Heart right ventricle (tissue), 16 donors: ENCODE measurements at regions of chr1 and their contacts with region 1.

Region 1: GRCh38 chr1:200738740-200739498 is at the start of gene CAMSAP2:
- DNase-seq: peak; percentile 91 to 92
- ATAC-seq: peak; percentile 91 to 97 (median 93)
- H3K4me3 ChIP-seq: peak within 1 kb of the TSS; percentile 69 to 98 (median 90)
- H3K27ac ChIP-seq: peak within 1 kb of the TSS; percentile 97 to 100 (median 100)
- H3K4me1 ChIP-seq: peaks cover 5 to 47% (median 36%) of the 10 kb centered on the region in 9 donors
- H3K27me3 ChIP-seq: peaks cover 0 to 39% (median 0%) of the 10 kb centered on the region in 7 donors
- CTCF ChIP-seq: no peak
- total RNA-seq, gene CAMSAP2: 36.4 to 47.1 (median 38.1) TPM

Region 2: GRCh38 chr1:200669314-200670241 is 69.3 kb before region 1 on chr1 and contains the start of gene DDX59:
- intact Hi-C with region 1: loop called in 9 of 10 experiments (anchors 1 to 10 kb)
- DNase-seq: peak; percentile 95 to 97
- ATAC-seq: peak; percentile 93 to 98 (median 96)
- H3K4me3 ChIP-seq: peak within 1 kb of the TSS; percentile 71 to 98 (median 88)
- H3K27ac ChIP-seq: peak within 1 kb of the TSS; percentile 98 to 100 (median 100)
- H3K4me1 ChIP-seq: peaks cover 4 to 49% (median 28%) of the 10 kb centered on the region in 9 donors
- H3K27me3 ChIP-seq: no peaks in the 10 kb centered on the region
- CTCF ChIP-seq: peak in 1 of 9 donors; percentile 12
- total RNA-seq, gene DDX59: 13.5 to 16.7 (median 14.5) TPM

Region 3: GRCh38 chr1:200774735-200775444 is 36.0 kb after region 1 on chr1:
- intact Hi-C with region 1: loop called in 2 of 10 experiments (anchors 5 kb)
- DNase-seq: no peak
- ATAC-seq: peak in 2 of 8 donors; percentile 23 to 32
- H3K4me3 ChIP-seq: no peak overlapping the region
- H3K27ac ChIP-seq: peak overlapping the region in 7 of 10 donors; percentile 5 to 67 (median 39)
- H3K4me1 ChIP-seq: peaks cover 0 to 58% (median 45%) of the 10 kb centered on the region in 9 donors
- H3K27me3 ChIP-seq: no peaks in the 10 kb centered on the region
- CTCF ChIP-seq: no peak